IMR-90 (cell line): ENCODE measurements at regions of chr5 and their contacts with region 1.

Region 1: GRCh38 chr5:122156724-122157325 is 27.5 kb downstream of the ZNF474 start:
- DNase-seq: peak; percentile 78
- ATAC-seq: no peak; the same call in 1 of the 2 replicates
- H3K4me3 ChIP-seq: no peak overlapping the region
- H3K27ac ChIP-seq: no peak overlapping the region
- H3K4me1 ChIP-seq: peaks cover 27% of the 10 kb centered on the region
- H3K27me3 ChIP-seq: no peaks in the 10 kb centered on the region
- CTCF ChIP-seq: peak; percentile 66
- POLR2A ChIP-seq: no peak
- RAD21 ChIP-seq: peak; percentile 80

Region 2: GRCh38 chr5:122091936-122092600 is 64.8 kb before region 1 on chr5:
- CTCF ChIA-PET with region 1: interaction called, 13 read pairs
- POLR2A ChIA-PET with region 1: no interaction called
- dilution Hi-C with region 1: no loop called
- in situ Hi-C with region 1: loop called (anchors 5 kb)
- intact Hi-C with region 1: loop called (anchors 2 kb)
- DNase-seq: peak; percentile 77
- ATAC-seq: peak; percentile 38
- H3K4me3 ChIP-seq: no peak overlapping the region
- H3K27ac ChIP-seq: peak overlapping the region; percentile 56
- H3K4me1 ChIP-seq: peaks cover 18% of the 10 kb centered on the region
- H3K27me3 ChIP-seq: no peaks in the 10 kb centered on the region
- CTCF ChIP-seq: peak; percentile 62
- POLR2A ChIP-seq: no peak
- RAD21 ChIP-seq: peak; percentile 63

Region 3: DNA sequence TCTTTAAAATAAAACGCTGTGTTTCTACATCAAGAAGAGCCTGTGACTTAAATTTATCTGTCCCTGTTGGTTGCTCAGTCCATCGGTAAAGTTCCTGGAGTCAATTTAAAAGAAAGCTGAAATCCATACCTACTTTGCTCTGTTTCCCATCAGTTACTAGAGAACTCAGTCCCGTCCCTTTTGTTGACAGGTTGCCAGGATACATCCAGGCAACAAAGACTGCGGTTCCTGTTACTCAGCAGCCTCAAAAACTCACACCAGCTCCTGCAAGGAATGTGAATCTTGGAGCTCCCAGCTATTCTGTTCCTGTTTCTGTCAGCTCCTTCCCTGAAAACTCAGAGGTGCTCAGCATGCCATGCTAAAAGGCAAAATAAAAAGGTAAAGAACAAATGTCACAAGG is 27.5 kb before region 1 on chr5 and contains the start of gene ZNF474:
- CTCF ChIA-PET with region 1: interaction called, 10 read pairs
- POLR2A ChIA-PET with region 1: no interaction called
- dilution Hi-C with region 1: no loop called
- in situ Hi-C with region 1: no loop called
- intact Hi-C with region 1: loop called (anchors 1 kb)
- DNase-seq: peak; percentile 98
- ATAC-seq: peak; percentile 66
- H3K4me3 ChIP-seq: no peak within 1 kb of the TSS
- H3K27ac ChIP-seq: no peak within 1 kb of the TSS
- H3K4me1 ChIP-seq: peaks cover 17% of the 10 kb centered on the region
- H3K27me3 ChIP-seq: no peaks in the 10 kb centered on the region
- CTCF ChIP-seq: no peak
- POLR2A ChIP-seq: no peak
- RAD21 ChIP-seq: no peak
- total RNA-seq, gene ZNF474: 0.54 and 0.56 TPM in 2 replicates